ENCODE measurements at regions of chr1 and their contacts with region 1.

Region 1: GRCh38 chr1:89179343-89179742 is 3.5 kb upstream of the GBP7 start:
- DNase-seq: no peak
- ATAC-seq: no peak
- H3K4me3 ChIP-seq: no peak overlapping the region
- H3K27ac ChIP-seq: no peak overlapping the region
- H3K4me1 ChIP-seq: no peaks in the 10 kb centered on the region
- H3K27me3 ChIP-seq: no peaks in the 10 kb centered on the region
- CTCF ChIP-seq: no peak
- EP300 ChIP-seq: no peak
- POLR2A ChIP-seq: no peak
- RAD21 ChIP-seq: no peak

Region 2: GRCh38 chr1:89165811-89166210 is 13.5 kb before region 1 on chr1:
- CTCF ChIA-PET with region 1: no interaction called
- POLR2A ChIA-PET with region 1: no interaction called
- in situ Hi-C with region 1: no loop called
- intact Hi-C with region 1: no loop called
- DNase-seq: no peak
- ATAC-seq: no peak
- H3K4me3 ChIP-seq: no peak overlapping the region
- H3K27ac ChIP-seq: no peak overlapping the region
- H3K4me1 ChIP-seq: no peaks in the 10 kb centered on the region
- H3K27me3 ChIP-seq: no peaks in the 10 kb centered on the region
- CTCF ChIP-seq: no peak
- EP300 ChIP-seq: no peak
- POLR2A ChIP-seq: no peak
- RAD21 ChIP-seq: no peak

Region 3: GRCh38 chr1:89221341-89221740 is 42.0 kb after region 1 on chr1:
- CTCF ChIA-PET with region 1: no interaction called
- POLR2A ChIA-PET with region 1: no interaction called
- in situ Hi-C with region 1: no loop called
- intact Hi-C with region 1: loop called (anchors 5 kb)
- DNase-seq: no peak
- ATAC-seq: no peak; the same call in 2 of the 3 replicates
- H3K4me3 ChIP-seq: no peak overlapping the region
- H3K27ac ChIP-seq: peak overlapping the region; percentile 34; the same call in 2 of the 3 replicates
- H3K4me1 ChIP-seq: no peaks in the 10 kb centered on the region
- H3K27me3 ChIP-seq: no peaks in the 10 kb centered on the region
- CTCF ChIP-seq: no peak
- EP300 ChIP-seq: no peak
- POLR2A ChIP-seq: no peak
- RAD21 ChIP-seq: no peak

Measured in K562 (cell line).